ENCODE measurements at regions of chr15 and their contacts with region 1.

Region 1: DNA sequence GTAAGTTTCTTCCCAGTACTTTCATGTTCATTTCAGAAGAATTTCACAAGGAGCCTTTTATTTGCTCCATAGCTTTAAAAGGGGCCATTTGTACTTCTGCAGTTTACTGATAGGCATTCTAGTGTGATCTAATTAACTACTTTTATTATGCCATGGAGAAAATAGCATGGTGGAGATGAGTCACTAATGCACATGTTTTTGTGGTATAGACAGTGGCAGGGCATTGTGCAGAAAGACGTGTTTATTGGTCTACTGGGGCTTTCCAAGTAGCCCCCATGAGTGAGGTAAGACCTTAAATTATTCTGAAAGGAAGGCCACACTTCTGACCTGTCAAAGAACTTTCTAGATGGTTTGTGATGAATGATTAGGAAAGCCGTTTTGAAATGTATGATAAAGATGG is 810.0 kb upstream of the NR2F2 start:
- DNase-seq: no peak

Region 2: DNA sequence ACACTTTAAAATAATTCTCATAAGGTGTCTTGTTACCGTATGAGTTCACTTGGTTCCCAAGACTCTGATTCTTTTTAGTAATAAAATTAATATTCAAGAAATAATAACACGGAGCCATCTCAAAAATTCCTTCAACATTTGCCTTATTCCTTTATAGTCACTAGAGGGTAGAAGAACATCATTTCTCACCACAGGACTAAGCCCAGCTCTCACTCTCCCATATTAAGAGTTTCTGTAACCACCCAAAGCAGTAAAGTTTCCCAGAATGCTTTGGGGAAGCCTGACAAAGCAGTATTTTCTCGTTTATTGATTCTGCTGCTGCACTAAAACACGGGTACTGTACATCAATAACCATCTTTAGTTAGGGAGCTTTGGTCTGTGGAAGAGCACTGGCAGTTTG is 1174.2 kb before region 1 on chr15:
- intact Hi-C with region 1: loop called in 1 of 2 experiments (anchors 10 kb)
- DNase-seq: no peak

Measured in posterior vena cava (tissue), 2 donors.